AG04450 (cell line): ENCODE measurements at regions of chr12 and their contacts with region 1.

Region 1: GRCh38 chr12:117151195-117152031 is 38.9 kb downstream of the FBXO21 start:
- DNase-seq: no peak
- H3K4me3 ChIP-seq: no peak overlapping the region
- H3K27ac ChIP-seq: no peak overlapping the region
- H3K27me3 ChIP-seq: no peaks in the 10 kb centered on the region
- CTCF ChIP-seq: peak; percentile 51

Region 2: DNA sequence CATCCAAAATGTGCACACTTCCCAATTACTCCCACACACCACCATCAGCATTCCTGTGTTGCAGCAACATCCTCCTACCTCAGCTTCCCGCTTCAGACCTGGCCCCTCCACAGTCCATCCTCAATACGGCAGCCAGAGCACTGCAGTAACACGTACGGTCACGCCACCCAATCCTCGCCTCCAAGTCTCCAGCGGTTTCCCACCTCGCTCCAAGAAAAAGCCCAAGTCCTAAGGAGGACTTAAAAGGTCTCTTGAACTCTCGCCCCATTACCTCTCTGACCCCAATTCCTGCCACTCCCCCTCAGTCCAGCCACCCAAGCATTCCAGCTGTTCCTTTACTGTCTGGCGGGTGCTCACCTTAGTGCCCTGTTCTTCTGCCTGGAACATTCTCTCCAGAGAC is 26.9 kb after region 1 on chr12:
- CTCF ChIA-PET with region 1: interaction called, 10 read pairs
- POLR2A ChIA-PET with region 1: no interaction called
- DNase-seq: no peak
- H3K4me3 ChIP-seq: no peak overlapping the region
- H3K27ac ChIP-seq: no peak overlapping the region
- H3K27me3 ChIP-seq: no peaks in the 10 kb centered on the region
- CTCF ChIP-seq: no peak